ENCODE measurements at regions of chr3 and their contacts with region 1.

Region 1: GRCh38 chr3:18127174-18127858 is 297.8 kb downstream of the SATB1 start:
- DNase-seq: peak; percentile 93
- H3K4me3 ChIP-seq: peak overlapping the region; percentile 55
- H3K27ac ChIP-seq: peak overlapping the region; percentile 86
- H3K4me1 ChIP-seq: peaks cover 38% of the 10 kb centered on the region
- CTCF ChIP-seq: peak; percentile 77

Region 2: DNA sequence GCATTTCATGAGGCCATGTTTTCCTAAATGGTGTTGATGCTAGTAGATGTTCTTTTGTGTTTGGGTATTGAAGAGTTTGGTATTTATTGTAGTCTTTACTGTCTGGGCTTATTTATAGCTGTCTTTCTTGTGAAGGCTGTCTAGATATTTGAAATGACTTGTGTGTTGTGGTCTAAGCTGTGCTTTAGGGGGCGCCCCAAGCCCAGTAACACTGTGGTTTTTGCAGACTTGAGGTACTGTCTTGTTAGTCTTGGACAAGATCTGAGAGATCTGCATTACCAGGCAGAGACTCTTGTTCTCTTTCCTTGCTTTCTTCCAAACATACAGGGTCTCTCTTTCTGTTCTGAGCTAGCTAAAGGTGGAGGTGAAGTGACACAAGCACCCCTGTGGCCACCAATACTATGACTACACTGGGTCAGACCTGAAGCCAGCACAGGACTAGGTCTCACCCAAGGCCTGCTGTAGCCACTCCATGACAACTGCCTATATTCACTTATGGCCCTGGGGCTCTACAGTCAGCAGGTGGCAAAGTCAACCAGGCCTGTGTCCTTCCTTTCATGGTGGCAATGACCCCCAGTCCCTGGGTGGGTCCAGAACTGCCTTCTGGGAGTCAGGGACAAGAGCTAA is 232.8 kb before region 1 on chr3:
- CTCF ChIA-PET with region 1: no interaction called
- POLR2A ChIA-PET with region 1: no interaction called
- intact Hi-C with region 1: loop called (anchors 5 kb)
- DNase-seq: peak; percentile 76
- H3K4me3 ChIP-seq: no peak overlapping the region
- H3K27ac ChIP-seq: no peak overlapping the region
- H3K4me1 ChIP-seq: no peaks in the 10 kb centered on the region
- CTCF ChIP-seq: peak; percentile 86

Region 3: GRCh38 chr3:18208856-18209255 is 81.5 kb after region 1 on chr3:
- CTCF ChIA-PET with region 1: no interaction called
- POLR2A ChIA-PET with region 1: interaction called, 13 read pairs
- intact Hi-C with region 1: no loop called
- DNase-seq: no peak
- H3K4me3 ChIP-seq: no peak overlapping the region
- H3K27ac ChIP-seq: no peak overlapping the region
- H3K4me1 ChIP-seq: peaks cover 30% of the 10 kb centered on the region
- CTCF ChIP-seq: no peak

Region 4: DNA sequence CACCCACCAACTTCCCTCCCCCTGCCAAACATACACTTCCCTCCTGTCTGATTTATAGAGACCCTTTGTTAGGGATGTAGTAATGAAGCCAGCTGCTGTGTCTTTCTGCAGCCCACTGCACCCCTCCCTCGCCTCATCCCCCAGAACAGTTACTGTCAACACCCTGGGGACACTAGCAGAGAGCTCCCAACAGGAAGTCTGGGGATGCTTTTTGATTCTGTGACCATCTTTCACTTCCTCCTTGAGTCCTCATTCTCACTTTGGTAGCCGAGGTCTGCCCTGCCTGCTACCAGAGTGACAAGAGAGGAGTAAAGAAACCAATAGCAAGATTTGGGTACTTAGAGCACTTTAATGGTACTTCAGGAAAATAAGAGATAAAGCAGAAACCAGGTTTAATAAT is 96.3 kb after region 1 on chr3:
- CTCF ChIA-PET with region 1: no interaction called
- POLR2A ChIA-PET with region 1: interaction called, 4 read pairs
- intact Hi-C with region 1: loop called (anchors 2 kb)
- DNase-seq: peak; percentile 97
- H3K4me3 ChIP-seq: peak overlapping the region; percentile 61
- H3K27ac ChIP-seq: peak overlapping the region; percentile 95
- H3K4me1 ChIP-seq: peaks cover 81% of the 10 kb centered on the region
- CTCF ChIP-seq: no peak

Region 5: GRCh38 chr3:18295171-18295920 is 168.0 kb after region 1 on chr3:
- CTCF ChIA-PET with region 1: interaction called, 4 read pairs
- POLR2A ChIA-PET with region 1: no interaction called
- intact Hi-C with region 1: loop called (anchors 2 kb)
- DNase-seq: peak; percentile 68
- H3K4me3 ChIP-seq: no peak overlapping the region
- H3K27ac ChIP-seq: no peak overlapping the region
- H3K4me1 ChIP-seq: no peaks in the 10 kb centered on the region
- CTCF ChIP-seq: peak; percentile 86

Region 6: GRCh38 chr3:18758047-18758704 is 630.9 kb after region 1 on chr3:
- CTCF ChIA-PET with region 1: no interaction called
- POLR2A ChIA-PET with region 1: no interaction called
- intact Hi-C with region 1: loop called (anchors 10 kb)
- DNase-seq: peak; percentile 90
- H3K4me3 ChIP-seq: no peak overlapping the region
- H3K27ac ChIP-seq: no peak overlapping the region
- H3K4me1 ChIP-seq: peaks cover 24% of the 10 kb centered on the region
- CTCF ChIP-seq: peak; percentile 97

Region 7: GRCh38 chr3:18988614-18989229 is 861.4 kb after region 1 on chr3:
- CTCF ChIA-PET with region 1: no interaction called
- POLR2A ChIA-PET with region 1: no interaction called
- intact Hi-C with region 1: loop called (anchors 10 kb)
- DNase-seq: peak; percentile 68
- H3K4me3 ChIP-seq: no peak overlapping the region
- H3K27ac ChIP-seq: no peak overlapping the region
- H3K4me1 ChIP-seq: no peaks in the 10 kb centered on the region
- CTCF ChIP-seq: peak; percentile 96